Transverse colon (tissue), 4 donors: ENCODE measurements at regions of chr2 and their contacts with region 1.

Region 1: GRCh38 chr2:181742922-181743722 is 62.8 kb upstream of the NEUROD1 start:
- DNase-seq: peak; percentile 44
- H3K4me3 ChIP-seq: no peak overlapping the region
- H3K27ac ChIP-seq: no peak overlapping the region
- H3K4me1 ChIP-seq: peaks cover 0 to 17% (median 2%) of the 10 kb centered on the region in 4 donors
- H3K27me3 ChIP-seq: no peaks in the 10 kb centered on the region
- CTCF ChIP-seq: peak; percentile 57 to 79 (median 63)
- EP300 ChIP-seq: no peak
- POLR2A ChIP-seq: no peak

Region 2: GRCh38 chr2:180742809-180743208 is 1000.3 kb before region 1 on chr2:
- in situ Hi-C with region 1: no loop called
- intact Hi-C with region 1: no loop called
- DNase-seq: no peak
- H3K4me3 ChIP-seq: no peak overlapping the region
- H3K27ac ChIP-seq: no peak overlapping the region
- H3K4me1 ChIP-seq: no peaks in the 10 kb centered on the region
- H3K27me3 ChIP-seq: no peaks in the 10 kb centered on the region
- CTCF ChIP-seq: no peak
- EP300 ChIP-seq: no peak
- POLR2A ChIP-seq: no peak

Region 3: DNA sequence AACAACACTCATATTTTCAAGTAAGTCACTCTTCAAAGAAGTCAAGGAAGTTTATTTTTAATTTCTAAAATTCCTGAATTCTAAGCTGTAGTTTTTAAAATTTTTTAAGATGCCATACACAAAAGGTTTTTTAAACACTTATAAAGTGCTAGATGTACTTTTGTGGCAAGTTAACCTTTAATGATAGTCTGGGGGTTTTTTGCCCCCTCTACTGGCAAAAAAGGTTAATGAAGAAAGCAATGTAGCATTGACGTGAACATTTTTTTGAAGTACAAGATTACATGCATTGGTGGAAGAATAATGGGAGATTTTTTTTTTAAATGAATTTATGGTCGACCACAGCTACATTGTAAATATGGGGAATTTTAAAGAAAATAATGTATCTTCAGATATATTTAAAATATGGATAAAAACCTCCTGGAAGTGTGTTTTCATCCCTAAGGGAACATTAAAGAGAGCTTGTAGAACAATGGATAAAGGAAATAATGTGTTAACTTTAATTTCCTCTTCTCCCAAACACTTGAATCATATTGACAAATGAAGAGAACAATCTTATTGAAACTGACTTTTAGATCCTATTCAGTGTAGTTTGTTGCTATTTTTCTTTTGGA is 161.0 kb after region 1 on chr2:
- in situ Hi-C with region 1: loop called (anchors 10 to 25 kb)
- intact Hi-C with region 1: no loop called
- DNase-seq: no peak
- H3K4me3 ChIP-seq: no peak overlapping the region
- H3K27ac ChIP-seq: no peak overlapping the region
- H3K4me1 ChIP-seq: peaks cover 3 to 77% (median 32%) of the 10 kb centered on the region in 4 donors
- H3K27me3 ChIP-seq: no peaks in the 10 kb centered on the region
- CTCF ChIP-seq: peak; percentile 41 to 50 (median 46)
- EP300 ChIP-seq: no peak
- POLR2A ChIP-seq: no peak

Region 4: DNA sequence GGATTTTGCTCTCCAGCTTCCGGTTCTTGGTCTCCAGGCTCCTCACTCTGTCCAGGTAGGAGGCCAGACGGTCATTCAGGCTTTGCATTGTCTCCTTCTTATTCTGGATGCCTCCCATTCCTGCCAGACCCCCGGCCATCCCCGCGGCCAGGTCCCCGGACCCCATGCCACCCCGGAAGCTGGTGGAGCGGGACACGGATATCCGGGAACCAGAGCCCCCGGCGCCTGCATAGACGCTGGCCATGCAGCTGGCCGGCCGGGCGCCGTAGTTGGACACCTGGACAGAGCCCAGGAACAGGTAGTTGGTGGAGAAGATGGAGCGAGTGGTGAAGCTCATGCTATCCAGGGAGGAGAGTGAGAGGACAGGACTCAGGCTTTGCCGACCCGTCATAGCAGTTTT is 219.0 kb after region 1 on chr2:
- in situ Hi-C with region 1: no loop called
- intact Hi-C with region 1: loop called (anchors 10 kb)
- DNase-seq: no peak
- H3K4me3 ChIP-seq: no peak overlapping the region
- H3K27ac ChIP-seq: no peak overlapping the region
- H3K4me1 ChIP-seq: no peaks in the 10 kb centered on the region
- H3K27me3 ChIP-seq: no peaks in the 10 kb centered on the region
- CTCF ChIP-seq: no peak
- EP300 ChIP-seq: no peak
- POLR2A ChIP-seq: no peak

Region 5: DNA sequence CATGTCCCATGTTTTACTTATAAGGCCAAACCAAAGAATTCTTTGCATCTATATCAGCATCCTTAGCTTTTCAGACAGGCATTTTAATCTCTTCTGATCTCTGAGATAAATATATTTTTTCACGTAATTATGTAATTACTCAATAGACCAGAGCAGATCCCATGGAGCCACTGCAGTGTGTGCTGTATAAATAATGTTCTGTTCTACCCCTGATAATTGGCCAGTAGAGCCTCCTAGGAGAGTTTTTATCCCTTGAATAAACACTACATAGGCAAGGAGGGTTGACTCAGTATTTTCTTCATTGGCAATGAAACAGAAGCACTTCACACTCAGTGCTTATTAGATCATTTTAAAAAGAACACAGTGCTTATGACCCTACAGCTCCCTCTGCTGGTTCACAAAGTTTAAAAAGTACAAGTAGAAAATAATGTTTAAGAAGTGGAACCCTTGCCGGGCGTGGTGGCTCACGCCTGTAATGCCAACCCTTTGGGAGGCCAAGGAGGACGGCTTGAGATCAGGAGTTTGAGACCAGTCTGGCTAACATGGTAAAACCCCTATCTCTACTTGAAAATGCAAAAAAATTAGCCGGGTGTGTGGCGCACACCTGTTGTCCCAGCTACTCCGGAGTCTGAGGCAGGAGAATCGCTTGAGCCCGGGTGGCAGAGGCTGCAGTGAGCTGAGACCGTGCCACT is 334.5 kb after region 1 on chr2:
- in situ Hi-C with region 1: loop called (anchors 10 to 25 kb)
- intact Hi-C with region 1: loop called (anchors 10 kb)
- DNase-seq: peak; percentile 14
- H3K4me3 ChIP-seq: no peak overlapping the region
- H3K27ac ChIP-seq: peak overlapping the region in 1 of 4 donors; percentile 3
- H3K4me1 ChIP-seq: peaks cover 0 to 35% (median 11%) of the 10 kb centered on the region in 4 donors
- H3K27me3 ChIP-seq: no peaks in the 10 kb centered on the region
- CTCF ChIP-seq: peak; percentile 59 to 68 (median 66)
- EP300 ChIP-seq: no peak
- POLR2A ChIP-seq: no peak

Region 6: GRCh38 chr2:182088681-182089320 is 345.7 kb after region 1 on chr2:
- in situ Hi-C with region 1: loop called in 2 of 4 experiments (anchors 10 to 25 kb)
- intact Hi-C with region 1: no loop called
- DNase-seq: no peak
- H3K4me3 ChIP-seq: no peak overlapping the region
- H3K27ac ChIP-seq: peak overlapping the region in 1 of 4 donors; percentile 5
- H3K4me1 ChIP-seq: peaks cover 0 to 5% (median 0%) of the 10 kb centered on the region in 4 donors
- H3K27me3 ChIP-seq: no peaks in the 10 kb centered on the region
- CTCF ChIP-seq: no peak
- EP300 ChIP-seq: no peak
- POLR2A ChIP-seq: no peak